Adrenal gland (tissue), 19 donors: ENCODE measurements at regions of chr21 and their contacts with region 1.

Region 1: DNA sequence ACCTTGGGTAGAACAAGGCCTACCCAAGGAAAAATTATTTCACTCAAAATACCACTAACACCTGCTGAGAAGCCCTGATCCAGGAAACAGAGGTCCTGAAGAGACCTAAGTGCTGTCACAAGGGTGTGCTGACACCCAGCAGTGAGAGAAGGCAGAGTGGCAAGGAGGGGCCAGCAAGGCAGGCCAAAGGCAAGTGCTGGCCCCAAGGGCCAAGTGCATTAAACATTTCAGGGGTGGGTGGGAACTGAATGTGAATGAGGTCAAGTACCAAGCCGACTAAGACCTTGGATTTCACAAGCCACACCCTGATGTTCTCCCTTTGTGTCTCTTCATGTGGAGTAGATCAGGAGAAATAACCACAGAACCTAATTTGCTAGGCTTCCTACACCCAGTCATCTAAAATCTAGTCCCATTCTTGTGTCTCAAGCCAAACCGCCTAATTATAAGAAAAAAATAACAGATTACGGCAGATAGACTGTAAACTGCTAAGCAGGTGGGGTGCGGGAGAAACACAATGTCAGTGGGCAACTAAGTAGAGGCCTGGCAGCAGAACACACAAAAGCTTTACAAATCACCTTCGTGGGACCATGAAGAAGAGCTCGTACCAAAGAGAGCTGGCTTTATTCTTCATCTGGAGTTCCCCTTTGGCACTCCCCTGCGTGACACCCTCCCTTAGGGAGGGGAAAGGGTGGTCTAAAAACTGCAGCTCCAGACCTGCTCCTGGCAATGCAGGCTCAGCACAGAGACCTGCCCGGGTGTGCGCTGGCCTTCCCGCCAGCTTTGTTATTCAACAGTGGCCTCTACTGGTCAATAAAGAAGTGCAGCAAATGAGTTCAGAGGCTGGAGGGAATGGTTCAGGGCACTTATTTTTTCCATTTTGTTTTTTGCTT is 8.7 kb downstream of the UBE2G2 start:
- DNase-seq: peak; percentile 45 to 77 (median 57)
- H3K4me3 ChIP-seq: no peak overlapping the region
- H3K27ac ChIP-seq: no peak overlapping the region
- H3K4me1 ChIP-seq: peaks cover 0 to 13% of the 10 kb centered on the region in 2 donors
- H3K27me3 ChIP-seq: no peaks in the 10 kb centered on the region
- CTCF ChIP-seq: peak; percentile 64 to 80 (median 74)
- POLR2A ChIP-seq: no peak

Region 2: GRCh38 chr21:44510508-44511210 is 282.3 kb before region 1 on chr21:
- intact Hi-C with region 1: loop called (anchors 5 kb)
- DNase-seq: peak; percentile 33 to 64 (median 52)
- H3K4me3 ChIP-seq: no peak overlapping the region
- H3K27ac ChIP-seq: no peak overlapping the region
- H3K4me1 ChIP-seq: no peaks in the 10 kb centered on the region
- H3K27me3 ChIP-seq: peaks cover 8% of the 10 kb centered on the region
- CTCF ChIP-seq: peak; percentile 61 to 80 (median 74)
- POLR2A ChIP-seq: no peak

Region 3: DNA sequence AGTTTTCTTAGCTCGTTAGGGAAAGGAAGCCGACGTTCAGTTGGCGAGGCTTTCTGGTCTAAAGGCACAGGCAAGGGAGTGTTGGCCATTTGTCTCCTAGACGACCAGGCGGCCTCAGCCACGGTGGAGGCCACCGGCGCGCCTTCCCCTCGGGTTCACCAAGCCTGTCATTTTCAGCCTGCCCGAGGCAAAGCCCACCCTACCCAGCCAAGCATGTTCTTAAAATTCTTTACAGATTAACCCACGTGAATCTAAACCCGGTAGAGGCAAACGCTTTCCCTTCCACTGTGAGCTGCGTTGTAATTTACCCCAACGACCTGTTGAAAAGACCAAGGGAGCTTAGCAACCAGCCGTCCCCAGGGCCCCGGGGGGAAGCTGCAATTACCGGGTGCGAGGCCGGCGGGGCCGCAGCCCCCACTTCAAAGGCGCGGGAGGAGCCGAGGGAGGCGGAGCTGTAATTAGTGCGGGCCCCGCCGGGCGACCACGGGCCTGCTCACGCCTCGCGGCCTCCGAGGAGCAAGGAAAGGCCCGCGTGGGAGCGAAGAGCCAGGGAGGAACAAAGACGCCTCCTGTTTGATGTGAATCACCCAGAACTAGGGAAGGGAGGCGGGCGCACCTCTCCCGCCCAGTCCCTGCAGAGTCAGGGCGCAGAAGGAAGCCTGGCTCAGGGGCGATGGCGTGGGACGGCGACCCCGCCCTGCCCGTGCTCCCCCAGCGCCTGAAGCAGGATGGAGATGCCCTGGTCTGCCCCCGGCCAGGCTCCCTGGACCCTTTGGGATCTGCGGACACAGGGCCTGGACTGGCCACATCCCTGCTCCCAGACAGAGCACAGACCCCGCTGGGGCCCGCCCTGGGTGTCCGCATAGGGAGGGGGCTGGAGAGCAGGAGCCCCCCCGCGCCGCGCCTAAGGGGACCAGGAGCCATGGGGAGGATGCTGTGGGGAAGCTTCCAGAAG is 69.5 kb before region 1 on chr21:
- intact Hi-C with region 1: no loop called
- DNase-seq: no peak
- H3K4me3 ChIP-seq: no peak overlapping the region
- H3K27ac ChIP-seq: no peak overlapping the region
- H3K4me1 ChIP-seq: no peaks in the 10 kb centered on the region
- H3K27me3 ChIP-seq: peaks cover 17% of the 10 kb centered on the region
- CTCF ChIP-seq: no peak
- POLR2A ChIP-seq: no peak

Region 4: DNA sequence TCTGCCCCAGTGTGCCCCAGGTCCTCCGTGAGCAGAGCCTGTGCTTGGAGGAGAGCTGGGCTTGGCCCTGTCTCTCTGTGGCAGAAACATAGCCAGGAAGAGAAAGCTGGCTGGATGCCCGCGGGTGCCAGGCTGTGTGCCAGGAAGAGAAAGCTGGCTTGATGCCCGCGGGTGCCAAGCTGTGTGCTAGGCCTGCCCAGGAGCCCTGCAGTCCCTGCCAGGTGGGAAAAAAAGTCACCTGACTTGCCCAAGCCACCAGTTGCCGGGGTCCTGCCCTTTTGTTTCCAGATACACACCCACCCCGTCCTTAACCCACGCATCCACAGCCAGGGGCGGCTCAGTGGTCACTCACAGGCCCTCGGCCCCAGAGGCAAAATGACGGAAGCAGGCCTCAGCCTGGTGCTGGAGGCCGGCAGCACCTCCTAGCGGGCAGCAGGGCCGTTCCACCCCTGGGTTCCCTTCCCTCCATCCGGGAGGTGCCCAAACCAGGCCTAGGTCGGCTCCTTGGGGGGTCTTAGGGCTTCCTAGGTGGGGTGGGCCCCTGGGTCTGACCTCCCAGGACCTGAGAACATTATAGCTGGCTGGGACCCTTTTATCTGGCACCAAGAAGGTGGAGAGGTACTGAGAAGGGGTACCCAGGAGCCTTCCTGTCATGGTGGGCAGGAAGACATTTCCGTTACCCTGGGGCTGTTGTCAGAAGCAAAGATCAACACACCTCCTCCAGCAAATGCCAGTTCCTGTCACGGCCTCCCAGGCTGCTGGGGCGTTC is 118.6 kb after region 1 on chr21:
- intact Hi-C with region 1: no loop called
- DNase-seq: peak; percentile 72 to 91 (median 84)
- H3K4me3 ChIP-seq: no peak overlapping the region
- H3K27ac ChIP-seq: peak overlapping the region in 1 of 5 donors; percentile 51
- H3K4me1 ChIP-seq: peaks cover 7 to 29% of the 10 kb centered on the region in 2 donors
- H3K27me3 ChIP-seq: no peaks in the 10 kb centered on the region
- CTCF ChIP-seq: peak in 4 of 6 experiments; percentile 36 to 49 (median 40)
- POLR2A ChIP-seq: no peak